Natural killer cell (primary cell): ENCODE measurements at regions of chr5 and their contacts with region 1.

Region 1: GRCh38 chr5:88680253-88681132 is 202.5 kb downstream of the MEF2C start:
- DNase-seq: peak; percentile 82 to 85
- ATAC-seq: peak; percentile 87 to 90 (median 89)
- H3K4me3 ChIP-seq: peak overlapping the region; percentile 11
- H3K4me3 Mint-ChIP-seq: peak overlapping the region; percentile 40
- H3K27ac ChIP-seq: no peak overlapping the region
- H3K27ac Mint-ChIP-seq: peak overlapping the region in 1 of 2 donors; percentile 20
- H3K4me1 ChIP-seq: peaks cover 25% of the 10 kb centered on the region
- H3K4me1 Mint-ChIP-seq: peaks cover 18 to 32% of the 10 kb centered on the region in 2 donors
- H3K27me3 ChIP-seq: peaks cover 92% of the 10 kb centered on the region
- H3K27me3 Mint-ChIP-seq: peaks cover 79 to 86% of the 10 kb centered on the region in 2 donors
- CTCF ChIP-seq: peak; percentile 97

Region 2: DNA sequence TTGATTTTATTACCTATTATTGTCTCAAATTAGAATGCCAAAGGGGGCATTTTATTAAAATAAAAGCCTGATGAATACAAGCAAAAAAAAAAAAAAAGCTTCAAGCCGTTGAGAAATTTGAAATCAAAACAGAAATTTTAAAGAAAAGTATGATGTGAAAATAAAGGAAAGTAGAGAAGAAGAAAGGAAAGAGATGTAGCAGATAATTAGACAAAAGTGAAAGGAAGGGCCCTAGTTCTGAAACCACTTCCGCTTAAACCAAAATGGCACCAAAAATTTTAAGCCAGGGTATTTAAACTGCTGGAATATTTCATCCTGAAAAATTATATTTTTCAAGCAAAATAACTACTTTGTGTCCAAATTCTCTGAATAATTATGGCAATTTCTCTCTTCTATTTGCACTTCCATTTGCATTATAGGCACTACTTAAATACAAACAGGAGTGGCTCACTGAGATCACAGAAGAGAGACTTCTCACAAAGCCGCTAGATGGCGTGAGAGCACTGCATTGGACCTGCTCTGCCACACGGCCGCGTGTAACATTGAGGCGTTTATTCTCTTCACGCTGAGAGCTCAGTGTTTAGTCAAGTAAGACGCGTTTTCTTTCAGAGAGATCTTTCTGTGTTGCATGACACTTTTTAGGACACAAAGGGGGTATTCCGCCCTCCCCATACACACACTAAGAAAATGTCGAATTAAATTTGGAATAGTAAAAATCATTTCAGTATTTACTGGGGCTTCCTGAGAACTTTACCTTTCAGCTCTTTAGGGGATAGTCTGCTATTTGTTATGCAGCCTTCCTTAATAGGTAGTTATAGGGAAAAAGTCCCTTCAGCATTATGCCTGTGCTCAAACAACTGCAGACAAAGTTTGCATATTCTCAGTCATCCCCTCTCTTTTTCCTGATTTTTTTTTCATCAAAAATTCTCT is 899.4 kb before region 1 on chr5:
- intact Hi-C with region 1: loop called (anchors 1 kb)
- DNase-seq: peak; percentile 64 to 90
- ATAC-seq: peak; percentile 94 to 100 (median 100)
- H3K4me3 ChIP-seq: no peak overlapping the region
- H3K4me3 Mint-ChIP-seq: no peak overlapping the region
- H3K27ac ChIP-seq: no peak overlapping the region
- H3K27ac Mint-ChIP-seq: no peak overlapping the region
- H3K4me1 ChIP-seq: no peaks in the 10 kb centered on the region
- H3K4me1 Mint-ChIP-seq: no peaks in the 10 kb centered on the region
- H3K27me3 ChIP-seq: peaks cover 20% of the 10 kb centered on the region
- H3K27me3 Mint-ChIP-seq: peaks cover 26 to 69% of the 10 kb centered on the region in 2 donors
- CTCF ChIP-seq: peak; percentile 93